ENCODE measurements at regions of chr20 and their contacts with region 1.

Region 1: GRCh38 chr20:45436732-45437391 is 20.9 kb downstream of the PIGT start:
- DNase-seq: peak; percentile 87
- H3K4me3 ChIP-seq: peak overlapping the region; percentile 63 to 74
- H3K27ac ChIP-seq: peak overlapping the region; percentile 13 to 14; a peak in 2 of 4 replicates
- H3K4me1 ChIP-seq: peaks cover 0 to 3% of the 10 kb centered on the region in 2 experiments; a peak in 2 of 4 replicates
- H3K27me3 ChIP-seq: no peaks in the 10 kb centered on the region
- CTCF ChIP-seq: peak; percentile 93
- EP300 ChIP-seq: no peak
- RAD21 ChIP-seq: peak; percentile 92

Region 2: GRCh38 chr20:45300961-45301360 is 135.9 kb before region 1 on chr20:
- CTCF ChIA-PET with region 1: interaction called, 11 read pairs
- POLR2A ChIA-PET with region 1: no interaction called
- DNase-seq: peak; percentile 79
- H3K4me3 ChIP-seq: no peak overlapping the region
- H3K27ac ChIP-seq: no peak overlapping the region
- H3K4me1 ChIP-seq: no peaks in the 10 kb centered on the region; a peak in 2 of 4 replicates
- H3K27me3 ChIP-seq: no peaks in the 10 kb centered on the region; the same call in 1 of the 2 replicates
- CTCF ChIP-seq: peak; percentile 52
- EP300 ChIP-seq: no peak
- RAD21 ChIP-seq: no peak

Region 3: GRCh38 chr20:45322952-45323383 is 113.9 kb before region 1 on chr20:
- CTCF ChIA-PET with region 1: interaction called, 122 read pairs
- POLR2A ChIA-PET with region 1: interaction called, 5 read pairs
- DNase-seq: no peak
- H3K4me3 ChIP-seq: no peak overlapping the region
- H3K27ac ChIP-seq: no peak overlapping the region
- H3K4me1 ChIP-seq: peaks cover 0 to 8% of the 10 kb centered on the region in 2 experiments; a peak in 1 of 4 replicates
- H3K27me3 ChIP-seq: no peaks in the 10 kb centered on the region
- CTCF ChIP-seq: peak; percentile 31; the same call in 1 of the 2 replicates
- EP300 ChIP-seq: no peak
- RAD21 ChIP-seq: peak; percentile 65

Region 4: DNA sequence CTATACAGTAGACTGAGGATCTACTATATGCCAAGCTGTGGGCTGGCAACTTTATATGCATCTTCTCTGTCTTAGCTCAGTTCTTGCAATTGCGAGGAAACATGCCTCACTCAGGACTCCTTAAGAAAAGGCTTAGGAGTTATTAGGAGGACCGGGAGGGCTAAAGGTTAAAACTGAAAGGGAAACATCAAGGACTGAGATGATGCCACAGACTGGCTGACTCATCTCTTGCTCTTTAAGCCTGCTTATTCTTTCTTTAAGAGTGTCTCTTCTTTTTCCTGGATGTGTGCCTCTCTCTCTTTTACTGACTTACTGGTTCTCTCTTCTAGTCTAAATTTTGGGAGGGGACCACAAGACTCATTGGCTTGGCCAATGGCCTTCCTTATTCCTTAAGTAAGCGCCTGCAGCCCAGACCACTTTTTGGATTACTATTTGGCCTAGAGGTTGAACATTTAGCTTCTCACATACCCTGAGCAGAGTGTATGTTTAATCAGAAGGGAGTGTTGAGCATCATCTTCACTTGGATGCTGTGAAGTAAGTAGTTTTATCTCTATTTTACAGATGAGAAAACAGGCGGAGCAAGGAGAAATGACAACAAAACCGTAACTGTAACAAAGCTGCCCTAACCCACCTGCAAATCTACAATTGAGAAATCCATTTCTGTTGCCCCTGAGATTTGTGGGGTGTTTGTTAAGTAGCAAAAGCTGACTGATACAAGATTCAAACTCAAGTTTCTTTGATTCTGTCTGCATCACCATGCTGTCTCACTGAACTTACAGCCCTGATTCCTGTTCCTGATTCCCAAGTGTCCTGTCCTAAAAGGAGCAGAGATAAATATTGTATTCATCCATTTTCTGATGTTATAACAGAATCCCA is 81.4 kb before region 1 on chr20:
- CTCF ChIA-PET with region 1: interaction called, 80 read pairs
- POLR2A ChIA-PET with region 1: no interaction called
- DNase-seq: no peak
- H3K4me3 ChIP-seq: no peak overlapping the region; a peak in 1 of 4 replicates
- H3K27ac ChIP-seq: peak overlapping the region in 1 of 2 experiments; percentile 66; a peak in 2 of 4 replicates
- H3K4me1 ChIP-seq: peaks cover 0 to 2% of the 10 kb centered on the region in 2 experiments; a peak in 2 of 4 replicates
- H3K27me3 ChIP-seq: no peaks in the 10 kb centered on the region
- CTCF ChIP-seq: no peak
- EP300 ChIP-seq: no peak
- RAD21 ChIP-seq: no peak

Region 5: GRCh38 chr20:45373353-45374100 is 63.3 kb before region 1 on chr20:
- CTCF ChIA-PET with region 1: interaction called, 143 read pairs
- POLR2A ChIA-PET with region 1: interaction called, 5 read pairs
- DNase-seq: peak; percentile 83
- H3K4me3 ChIP-seq: no peak overlapping the region
- H3K27ac ChIP-seq: no peak overlapping the region
- H3K4me1 ChIP-seq: no peaks in the 10 kb centered on the region
- H3K27me3 ChIP-seq: no peaks in the 10 kb centered on the region
- CTCF ChIP-seq: peak; percentile 76
- EP300 ChIP-seq: no peak
- RAD21 ChIP-seq: peak; percentile 74

Region 6: DNA sequence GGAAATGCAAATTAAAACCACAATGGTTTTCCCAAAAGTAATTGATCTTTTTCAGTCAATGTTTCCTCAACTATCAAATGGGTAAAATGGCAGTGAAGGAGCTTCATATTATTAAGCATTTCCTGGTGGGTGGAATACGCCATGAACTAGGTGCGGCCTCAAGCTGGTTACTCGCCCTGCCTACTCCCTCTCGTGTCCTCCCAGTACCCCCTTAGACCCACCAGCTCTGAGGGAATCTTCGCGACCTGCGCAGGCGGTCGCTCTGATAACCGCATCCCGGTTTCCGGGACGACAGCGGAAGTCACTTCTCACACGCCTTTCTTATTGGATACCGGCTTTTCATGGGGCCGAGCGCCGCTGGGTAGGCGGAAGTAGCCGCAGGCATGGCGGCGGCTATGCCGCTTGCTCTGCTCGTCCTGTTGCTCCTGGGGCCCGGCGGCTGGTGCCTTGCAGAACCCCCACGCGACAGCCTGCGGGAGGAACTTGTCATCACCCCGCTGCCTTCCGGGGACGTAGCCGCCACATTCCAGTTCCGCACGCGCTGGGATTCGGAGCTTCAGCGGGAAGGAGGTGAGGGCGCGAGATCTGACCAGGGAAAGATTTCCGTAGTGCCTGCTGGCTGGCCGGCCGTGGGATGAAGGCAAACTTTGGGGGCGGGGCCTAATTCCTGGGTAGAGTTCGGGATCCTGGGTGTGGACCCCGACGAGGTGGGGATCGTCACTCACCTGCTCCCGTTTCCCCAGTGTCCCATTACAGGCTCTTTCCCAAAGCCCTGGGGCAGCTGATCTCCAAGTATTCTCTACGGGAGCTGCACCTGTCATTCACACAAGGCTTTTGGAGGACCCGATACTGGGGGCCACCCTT is 20.9 kb before region 1 on chr20 and contains the start of gene PIGT:
- CTCF ChIA-PET with region 1: interaction called, 26 read pairs
- POLR2A ChIA-PET with region 1: interaction called, 7 read pairs
- DNase-seq: peak; percentile 91
- H3K4me3 ChIP-seq: peak within 1 kb of the TSS; percentile 74 to 100
- H3K27ac ChIP-seq: peak within 1 kb of the TSS; percentile 52 to 81; a peak in 3 of 4 replicates
- H3K4me1 ChIP-seq: peaks cover 6 to 7% of the 10 kb centered on the region in 2 experiments
- H3K27me3 ChIP-seq: no peaks in the 10 kb centered on the region
- CTCF ChIP-seq: no peak
- EP300 ChIP-seq: no peak
- RAD21 ChIP-seq: no peak
- polyA plus RNA-seq, gene PIGT: 144 and 149 TPM in 2 replicates

Region 7: DNA sequence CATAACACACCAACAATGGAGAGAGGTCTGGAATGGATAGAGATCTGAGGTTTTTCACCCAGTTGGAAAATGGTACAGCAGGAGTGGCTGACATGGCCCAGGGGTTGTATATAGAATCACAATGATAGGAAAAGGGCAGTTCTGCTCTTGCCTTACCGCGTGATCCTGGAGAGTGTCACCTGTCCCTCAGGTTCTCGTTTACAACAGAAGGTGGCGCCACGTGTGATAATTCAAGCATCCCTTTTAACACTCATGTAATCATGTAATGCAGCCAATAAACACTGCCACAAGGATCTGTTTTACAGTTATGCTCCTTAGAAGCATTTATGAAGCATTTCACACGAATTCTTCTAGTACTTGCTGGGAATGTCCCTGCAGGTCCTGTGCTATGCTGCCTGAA is 19.8 kb after region 1 on chr20:
- CTCF ChIA-PET with region 1: interaction called, 30 read pairs
- POLR2A ChIA-PET with region 1: interaction called, 3 read pairs
- DNase-seq: no peak
- H3K4me3 ChIP-seq: no peak overlapping the region
- H3K27ac ChIP-seq: no peak overlapping the region
- H3K4me1 ChIP-seq: no peaks in the 10 kb centered on the region
- H3K27me3 ChIP-seq: peaks cover 28% of the 10 kb centered on the region; the same call in 1 of the 2 replicates
- CTCF ChIP-seq: peak; percentile 36; the same call in 1 of the 2 replicates
- EP300 ChIP-seq: no peak
- RAD21 ChIP-seq: no peak

Region 8: GRCh38 chr20:45507011-45507820 is 70.4 kb after region 1 on chr20:
- CTCF ChIA-PET with region 1: no interaction called
- POLR2A ChIA-PET with region 1: no interaction called
- DNase-seq: no peak
- H3K4me3 ChIP-seq: no peak overlapping the region
- H3K27ac ChIP-seq: no peak overlapping the region
- H3K4me1 ChIP-seq: no peaks in the 10 kb centered on the region
- H3K27me3 ChIP-seq: no peaks in the 10 kb centered on the region; the same call in 1 of the 2 replicates
- CTCF ChIP-seq: no peak
- EP300 ChIP-seq: no peak; a peak in 1 of 4 replicates
- RAD21 ChIP-seq: no peak